HEK293 (cell line): ENCODE measurements at regions of chr22 and their contacts with region 1.

Region 1: DNA sequence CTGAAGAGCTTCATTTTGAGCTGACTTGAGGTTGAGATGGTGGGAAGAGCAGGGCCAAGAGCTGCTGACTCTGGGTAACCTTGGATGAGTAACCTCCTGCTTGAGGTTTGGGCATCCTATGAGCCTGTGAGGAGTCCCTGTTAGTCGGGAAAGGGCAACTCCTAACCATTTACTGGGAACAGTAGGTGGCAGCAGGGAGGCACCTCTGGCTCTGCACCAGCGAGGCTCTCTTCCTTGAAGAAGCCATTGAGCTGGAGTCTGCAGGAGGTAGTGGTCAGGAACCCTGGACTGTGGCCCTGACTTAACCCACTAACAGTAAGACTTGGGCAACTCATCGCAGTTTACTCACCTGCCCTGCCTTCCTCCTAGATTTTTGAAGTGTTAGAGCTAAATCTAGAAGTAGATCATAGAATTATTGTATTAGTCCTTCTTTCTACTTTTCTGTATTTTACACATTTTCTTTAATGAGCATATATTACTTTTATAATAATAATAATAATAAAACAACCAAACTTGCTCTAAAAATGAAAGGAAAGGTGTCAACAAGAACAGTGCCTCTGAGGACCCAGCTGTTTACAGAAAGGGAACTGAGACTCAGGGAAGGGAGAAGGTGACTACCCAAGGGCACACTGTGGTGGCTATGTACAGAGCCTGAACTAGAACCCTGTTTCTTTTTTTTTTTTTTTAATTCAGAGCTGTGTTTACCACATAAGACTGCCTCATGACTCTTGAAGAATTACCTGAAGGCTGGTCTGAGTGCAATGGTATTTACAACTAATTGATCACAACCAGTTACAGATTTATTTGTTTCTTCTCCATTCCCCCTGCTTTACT is 47.5 kb downstream of the MEI1 start:
- H3K4me3 ChIP-seq: no peak overlapping the region
- H3K27ac ChIP-seq: no peak overlapping the region
- H3K4me1 ChIP-seq: no peaks in the 10 kb centered on the region
- CTCF ChIP-seq: peak; percentile 55

Region 2: GRCh38 chr22:41732096-41732772 is 14.6 kb before region 1 on chr22:
- CTCF ChIA-PET with region 1: interaction called, 33 read pairs
- POLR2A ChIA-PET with region 1: no interaction called
- H3K4me3 ChIP-seq: no peak overlapping the region
- H3K27ac ChIP-seq: no peak overlapping the region
- H3K4me1 ChIP-seq: no peaks in the 10 kb centered on the region; the same call in 1 of the 2 replicates
- CTCF ChIP-seq: no peak

Region 3: GRCh38 chr22:41762980-41763779 is 16.4 kb after region 1 on chr22:
- CTCF ChIA-PET with region 1: interaction called, 30 read pairs
- POLR2A ChIA-PET with region 1: interaction called, 5 read pairs
- H3K4me3 ChIP-seq: no peak overlapping the region
- H3K27ac ChIP-seq: no peak overlapping the region
- H3K4me1 ChIP-seq: no peaks in the 10 kb centered on the region
- CTCF ChIP-seq: peak; percentile 53; the same call in 1 of the 2 replicates

Region 4: GRCh38 chr22:41780746-41781505 is 34.1 kb after region 1 on chr22:
- CTCF ChIA-PET with region 1: interaction called, 12 read pairs
- POLR2A ChIA-PET with region 1: no interaction called
- H3K4me3 ChIP-seq: no peak overlapping the region
- H3K27ac ChIP-seq: no peak overlapping the region
- H3K4me1 ChIP-seq: no peaks in the 10 kb centered on the region
- CTCF ChIP-seq: no peak

Region 5: DNA sequence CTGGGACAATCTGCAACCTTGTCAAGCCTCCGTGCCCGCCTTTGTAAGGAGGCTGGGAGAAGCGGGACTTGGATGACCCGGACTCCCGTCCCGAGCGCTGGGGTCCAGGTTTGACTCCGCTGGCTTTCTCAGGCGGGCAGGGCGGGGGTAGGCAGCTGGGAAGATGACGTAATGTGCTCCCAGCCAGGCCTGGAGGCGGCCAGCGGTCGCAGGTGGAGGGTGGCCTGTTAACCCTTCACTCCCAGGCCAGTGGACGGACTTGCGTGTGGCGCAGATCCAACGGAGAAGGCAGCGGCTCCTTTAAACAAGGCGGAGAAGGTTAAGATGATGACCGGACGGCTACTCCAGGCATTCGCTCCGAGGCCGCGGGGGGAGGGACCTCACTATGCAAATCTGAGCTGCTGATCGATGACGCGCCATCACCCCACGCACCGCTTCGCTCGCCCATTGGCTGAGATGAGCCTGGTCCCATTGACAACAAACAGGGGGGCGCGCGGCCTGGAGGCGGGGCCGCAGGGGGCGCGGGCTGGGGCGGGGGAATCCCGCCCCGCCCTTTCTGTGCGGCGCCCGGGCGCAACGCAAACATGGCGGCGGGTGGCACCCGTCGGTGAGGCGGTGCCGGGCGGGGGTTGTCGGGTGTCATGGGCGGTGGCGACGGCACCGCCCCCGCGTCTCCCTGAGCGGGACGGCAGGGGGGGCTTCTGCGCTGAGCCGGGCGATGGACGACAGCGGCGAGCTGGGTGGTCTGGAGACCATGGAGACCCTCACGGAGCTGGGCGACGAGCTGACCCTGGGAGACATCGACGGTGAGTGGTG is 86.0 kb after region 1 on chr22 and contains the start of gene SREBF2:
- CTCF ChIA-PET with region 1: interaction called, 19 read pairs
- POLR2A ChIA-PET with region 1: no interaction called
- H3K4me3 ChIP-seq: peak within 1 kb of the TSS; percentile 96
- H3K27ac ChIP-seq: peak within 1 kb of the TSS; percentile 87
- H3K4me1 ChIP-seq: peaks cover 3% of the 10 kb centered on the region; the same call in 1 of the 2 replicates
- CTCF ChIP-seq: peak; percentile 69

Region 6: DNA sequence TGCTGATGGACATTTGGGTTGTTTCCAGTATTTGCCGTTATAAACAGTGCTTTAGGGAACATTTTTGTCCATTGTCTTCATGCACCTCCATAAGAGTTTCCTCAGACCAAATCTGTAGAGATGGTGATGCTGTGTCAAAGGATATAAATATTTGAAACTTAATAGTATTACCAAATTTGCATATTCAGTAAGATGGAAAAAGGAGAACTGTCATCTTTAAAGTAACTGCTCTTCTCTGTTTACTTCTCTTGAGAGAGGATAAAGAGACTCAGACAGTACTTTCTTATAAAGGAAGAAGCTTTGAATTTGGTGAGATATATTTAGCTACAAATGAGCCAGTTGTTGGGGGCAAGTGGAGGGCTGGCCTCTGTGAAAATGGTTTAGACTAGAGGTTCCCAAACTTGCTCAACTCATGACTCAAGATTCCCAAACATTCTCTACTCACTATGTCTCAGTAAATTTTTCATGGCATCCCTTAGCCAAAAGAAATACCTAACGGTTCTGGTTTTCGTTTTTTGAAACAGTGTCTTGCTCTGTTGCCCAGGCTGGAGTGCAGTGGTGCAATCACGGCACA is 141.9 kb after region 1 on chr22:
- CTCF ChIA-PET with region 1: no interaction called
- POLR2A ChIA-PET with region 1: no interaction called
- H3K4me3 ChIP-seq: no peak overlapping the region
- H3K27ac ChIP-seq: no peak overlapping the region
- H3K4me1 ChIP-seq: no peaks in the 10 kb centered on the region
- CTCF ChIP-seq: no peak

Region 7: DNA sequence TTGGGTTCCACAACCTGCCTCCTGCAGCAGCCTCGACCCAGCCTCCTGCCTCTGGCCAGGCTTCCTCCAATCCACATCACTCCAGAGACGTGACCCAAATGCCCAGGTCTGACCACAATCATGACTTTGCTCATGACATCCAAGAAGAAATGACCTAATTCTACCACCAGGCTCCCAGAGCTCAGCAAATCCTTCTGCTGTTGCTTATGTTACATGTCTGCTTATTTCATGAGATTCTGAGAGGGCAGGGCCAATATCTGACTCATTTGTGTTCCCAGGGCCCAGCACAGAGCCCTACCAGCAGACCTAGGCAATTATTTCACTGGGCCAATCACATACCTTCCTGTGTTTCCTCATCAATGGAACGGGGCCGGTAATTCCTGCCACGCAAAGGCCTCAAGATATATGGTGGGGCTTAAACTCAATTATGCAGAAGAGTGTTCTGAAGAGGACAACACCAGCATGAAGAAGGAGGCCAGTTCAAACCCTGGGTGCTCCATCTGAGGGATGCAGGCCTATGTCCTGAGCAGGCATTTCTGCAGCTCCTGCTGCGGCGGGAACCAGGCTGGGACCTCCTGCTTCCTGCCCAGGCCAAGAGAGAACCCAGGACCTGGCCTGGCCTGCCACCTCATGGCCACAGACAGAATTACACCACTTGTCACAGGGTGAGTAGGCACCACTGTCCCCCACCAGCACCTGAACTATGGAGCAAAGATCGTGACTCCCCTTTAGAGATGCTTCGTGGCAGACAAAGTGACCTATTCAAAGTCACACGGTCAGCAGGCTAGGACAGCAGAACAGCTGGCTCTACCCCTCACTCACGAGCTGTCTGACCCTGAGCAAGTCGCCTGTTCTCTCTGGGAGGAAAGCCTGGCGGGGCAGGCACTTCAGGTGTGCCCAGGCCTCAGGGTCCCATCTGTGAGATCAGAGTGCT is 194.3 kb after region 1 on chr22:
- CTCF ChIA-PET with region 1: interaction called, 12 read pairs
- POLR2A ChIA-PET with region 1: no interaction called
- H3K4me3 ChIP-seq: no peak overlapping the region
- H3K27ac ChIP-seq: 0 out of 2 replicates have a peak overlapping the region, but pooled peaks have one; percentile 12
- H3K4me1 ChIP-seq: no peaks in the 10 kb centered on the region; the same call in 1 of the 2 replicates
- CTCF ChIP-seq: peak; percentile 86